Activated T-helper 1 cell treated with anti-CD3 and anti-CD28 coated beads, Interleukin-12 subunit alpha, Interleukin-12 subunit beta, Interleukin-2, Interleukin-4 antibody, amounts not matched to agents 30 ng/mL and 10 ng/mL and 1 ng/mL, durations not matched to agents 14 hours and 24 hours and 36 hours (primary cell): ENCODE measurements at regions of chr2 and their contacts with region 1.

Region 1: DNA sequence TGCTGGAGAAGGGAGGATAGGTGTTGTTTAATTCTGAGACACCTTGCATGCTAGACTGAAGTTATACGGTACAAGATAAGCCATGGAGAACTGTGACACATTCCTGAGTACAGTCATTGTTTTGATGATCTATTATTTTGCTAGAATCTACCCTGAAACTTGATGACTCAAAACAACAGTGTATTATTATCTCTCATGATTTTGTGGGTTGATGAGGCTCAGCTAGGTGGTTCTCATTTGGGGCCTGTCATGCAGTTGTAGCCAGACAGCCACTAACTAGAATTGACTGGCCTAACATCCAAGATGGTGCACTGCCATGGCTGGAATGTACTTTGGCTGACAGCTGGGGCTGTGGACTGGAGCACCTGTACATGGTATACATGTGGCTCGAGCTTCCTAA is 5.4 kb upstream of the IL1R1 start:
- DNase-seq: no peak
- H3K4me3 Mint-ChIP-seq: no peak overlapping the region
- H3K27ac Mint-ChIP-seq: peak overlapping the region; percentile 15
- H3K4me1 Mint-ChIP-seq: peaks cover 33% of the 10 kb centered on the region
- H3K27me3 Mint-ChIP-seq: peaks cover 21% of the 10 kb centered on the region

Region 2: GRCh38 chr2:101998896-101999789 is 138.0 kb before region 1 on chr2:
- intact Hi-C with region 1: loop called (anchors 1 kb)
- DNase-seq: no peak
- H3K4me3 Mint-ChIP-seq: no peak overlapping the region
- H3K27ac Mint-ChIP-seq: peak overlapping the region; percentile 76
- H3K4me1 Mint-ChIP-seq: peaks cover 27% of the 10 kb centered on the region
- H3K27me3 Mint-ChIP-seq: peaks cover 4% of the 10 kb centered on the region

Region 3: DNA sequence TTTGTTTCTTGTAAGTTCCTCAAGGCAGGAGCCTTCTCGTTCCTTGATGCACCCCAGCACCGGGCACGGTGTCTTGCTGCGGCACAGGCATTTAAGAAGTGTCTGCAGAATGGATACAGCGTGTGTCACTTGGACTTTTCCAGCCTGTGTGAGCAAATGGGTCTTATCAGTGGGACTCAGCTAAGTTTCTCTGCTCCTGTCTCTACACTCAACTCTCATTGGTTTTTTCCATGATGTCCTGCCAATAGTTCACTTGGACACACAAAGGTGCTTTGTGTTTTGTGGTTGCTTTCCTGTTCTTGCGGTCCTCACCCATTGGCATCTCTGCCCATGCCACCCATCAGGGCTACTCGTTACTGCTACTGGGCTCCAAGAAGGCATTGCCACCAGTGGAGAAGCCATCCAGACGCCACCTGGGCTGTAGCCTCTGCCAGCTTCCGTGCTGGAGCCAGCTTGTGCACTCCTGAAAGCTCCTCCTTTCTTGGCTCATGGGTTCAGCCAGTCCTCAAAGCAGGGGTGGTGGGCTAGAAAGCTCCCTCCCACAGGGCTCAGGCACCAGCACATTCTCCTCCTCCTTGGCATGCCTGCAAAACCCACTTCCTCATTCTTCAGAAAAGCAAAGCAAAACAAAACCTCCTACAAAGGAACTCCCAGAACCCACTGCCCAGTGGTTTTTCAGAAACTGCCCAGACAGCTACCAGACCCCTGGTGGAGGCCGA is 103.9 kb before region 1 on chr2:
- intact Hi-C with region 1: no loop called
- DNase-seq: peak; percentile 4
- H3K4me3 Mint-ChIP-seq: peak overlapping the region; percentile 24
- H3K27ac Mint-ChIP-seq: peak overlapping the region; percentile 78
- H3K4me1 Mint-ChIP-seq: peaks cover 52% of the 10 kb centered on the region
- H3K27me3 Mint-ChIP-seq: peaks cover 7% of the 10 kb centered on the region

Region 4: GRCh38 chr2:102103992-102104871 is 32.9 kb before region 1 on chr2:
- intact Hi-C with region 1: loop called (anchors 1 kb)
- DNase-seq: peak; percentile 22
- H3K4me3 Mint-ChIP-seq: peak overlapping the region; percentile 72
- H3K27ac Mint-ChIP-seq: peak overlapping the region; percentile 13
- H3K4me1 Mint-ChIP-seq: peaks cover 24% of the 10 kb centered on the region
- H3K27me3 Mint-ChIP-seq: peaks cover 17% of the 10 kb centered on the region

Region 5: DNA sequence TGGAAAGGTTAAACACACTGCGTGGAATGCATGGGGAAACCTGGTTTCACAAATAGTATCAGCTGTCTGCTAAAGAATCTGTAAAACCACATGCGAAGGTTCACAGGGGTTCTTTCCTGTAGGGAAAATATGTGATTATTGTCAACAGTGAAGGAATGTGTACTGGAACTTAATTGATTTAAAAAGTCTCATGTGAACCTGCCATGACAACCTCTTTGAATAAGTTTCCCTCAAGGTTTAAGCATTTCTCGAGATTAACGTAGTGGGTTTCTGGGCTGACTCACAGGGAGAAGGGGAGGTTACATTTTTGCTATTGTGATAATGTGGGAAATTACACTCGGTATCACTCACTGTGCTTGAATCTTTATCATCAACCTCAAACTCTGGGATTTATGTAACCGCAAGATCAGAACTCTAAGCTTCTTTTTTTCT is 22.8 kb before region 1 on chr2:
- intact Hi-C with region 1: loop called (anchors 1 kb)
- DNase-seq: no peak
- H3K4me3 Mint-ChIP-seq: no peak overlapping the region
- H3K27ac Mint-ChIP-seq: no peak overlapping the region
- H3K4me1 Mint-ChIP-seq: peaks cover 32% of the 10 kb centered on the region
- H3K27me3 Mint-ChIP-seq: peaks cover 15% of the 10 kb centered on the region

Region 6: DNA sequence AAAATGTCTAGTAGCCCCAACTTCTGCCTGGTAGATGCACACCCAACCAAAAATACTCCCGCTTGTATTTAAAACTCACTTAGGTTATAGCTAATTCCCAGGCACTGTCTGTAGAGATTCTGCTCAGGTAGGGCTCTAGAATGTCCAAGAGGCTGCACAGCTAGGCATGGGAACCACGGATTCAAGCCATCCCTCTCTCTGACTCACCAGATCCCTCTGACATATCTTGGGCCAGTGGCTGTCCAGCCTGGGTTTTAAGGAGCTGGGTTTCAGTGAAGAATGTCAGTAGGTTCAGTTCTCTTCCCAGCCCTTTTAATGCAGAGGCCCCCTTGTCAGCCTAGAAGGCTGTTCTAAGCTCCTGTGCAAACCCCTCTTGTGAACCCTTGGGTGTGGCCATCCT is 10.5 kb before region 1 on chr2:
- intact Hi-C with region 1: no loop called
- DNase-seq: no peak
- H3K4me3 Mint-ChIP-seq: no peak overlapping the region
- H3K27ac Mint-ChIP-seq: no peak overlapping the region
- H3K4me1 Mint-ChIP-seq: no peaks in the 10 kb centered on the region
- H3K27me3 Mint-ChIP-seq: peaks cover 2% of the 10 kb centered on the region

Region 7: DNA sequence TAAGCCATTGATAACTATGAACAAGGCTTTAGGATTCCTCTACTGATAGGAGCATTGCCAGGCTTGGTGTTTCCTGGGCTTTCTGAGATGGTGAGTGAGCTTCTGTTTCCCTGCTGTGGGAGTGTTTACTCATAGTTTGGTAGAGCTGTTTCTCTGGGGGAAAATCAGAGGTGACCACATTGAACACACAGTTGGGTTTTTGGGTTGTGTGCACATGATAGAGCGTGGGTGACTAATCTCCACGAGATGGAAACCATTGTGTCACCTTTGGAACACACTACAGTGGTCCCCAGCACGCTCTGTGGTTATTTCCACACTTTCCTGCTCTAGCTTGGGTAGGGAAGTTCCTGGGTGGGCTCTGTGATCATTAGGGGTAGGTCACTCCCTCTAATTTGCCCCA is 10.8 kb after region 1 on chr2:
- intact Hi-C with region 1: loop called (anchors 1 kb)
- DNase-seq: no peak
- H3K4me3 Mint-ChIP-seq: no peak overlapping the region
- H3K27ac Mint-ChIP-seq: peak overlapping the region; percentile 63
- H3K4me1 Mint-ChIP-seq: peaks cover 13% of the 10 kb centered on the region
- H3K27me3 Mint-ChIP-seq: peaks cover 10% of the 10 kb centered on the region